Cardiac septum (tissue), 1 donor: ENCODE measurements at regions of chr16 and their contacts with region 1.

Region 1: GRCh38 chr16:27639561-27640276 is 89.8 kb downstream of the KATNIP start:
- DNase-seq: no peak

Region 2: GRCh38 chr16:27816561-27816960 is 176.8 kb after region 1 on chr16:
- intact Hi-C with region 1: no loop called
- DNase-seq: peak; percentile 15

Region 3: GRCh38 chr16:27867122-27868110 is 227.7 kb after region 1 on chr16:
- intact Hi-C with region 1: loop called (anchors 5 kb)
- DNase-seq: no peak

Region 4: DNA sequence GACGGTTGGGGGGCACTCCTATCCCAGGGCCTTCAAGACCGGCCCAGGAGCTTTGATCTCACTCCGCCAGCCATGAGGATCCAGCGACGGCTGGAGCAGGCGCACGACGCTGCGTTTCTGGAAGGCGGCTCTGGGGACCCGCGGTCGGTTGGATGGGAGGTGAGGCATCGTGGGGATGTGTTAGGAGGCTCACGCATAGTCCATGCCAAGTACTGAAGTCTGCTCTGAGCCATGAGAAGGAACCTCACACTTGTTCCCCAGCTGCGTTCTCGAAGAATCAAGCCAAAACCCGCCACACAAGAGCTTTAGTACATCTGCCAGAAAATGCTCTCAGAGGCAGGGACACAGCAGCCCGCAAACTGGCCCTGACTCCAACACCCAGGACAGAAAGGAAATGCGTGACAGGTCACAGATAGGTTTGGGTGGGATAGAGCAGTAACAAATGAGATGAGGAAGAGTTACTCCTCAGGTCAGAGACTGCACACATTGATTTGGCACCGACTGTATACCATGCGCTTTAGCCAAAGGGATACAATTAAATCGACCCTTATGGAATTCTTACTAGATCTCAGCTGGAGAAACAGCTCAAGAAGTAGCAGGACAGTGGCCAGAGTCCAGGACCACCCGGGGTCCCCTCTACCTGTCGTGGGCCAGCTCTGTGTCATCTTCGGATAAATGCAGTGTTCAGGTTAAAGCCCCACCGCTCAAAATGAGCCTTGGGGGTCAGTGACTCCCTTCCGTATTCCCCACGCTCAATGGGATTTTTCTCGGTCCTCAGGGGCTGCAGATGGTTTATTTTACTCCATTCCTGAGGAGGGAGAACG is 430.5 kb after region 1 on chr16:
- intact Hi-C with region 1: loop called (anchors 5 kb)
- DNase-seq: no peak